Naive thymus-derived CD4-positive, alpha-beta T cell (primary cell): ENCODE measurements at regions of chr12 and their contacts with region 1.

Region 1: GRCh38 chr12:1594261-1595025 is at the start of gene FBXL14:
- DNase-seq: peak; percentile 87 to 93 (median 92)
- ATAC-seq: peak; percentile 85
- H3K4me3 ChIP-seq: peak within 1 kb of the TSS; percentile 91
- H3K4me3 Mint-ChIP-seq: peak within 1 kb of the TSS; percentile 89 to 98 (median 95)
- H3K27ac ChIP-seq: peak within 1 kb of the TSS; percentile 80
- H3K27ac Mint-ChIP-seq: peak within 1 kb of the TSS; percentile 94 to 97 (median 94)
- H3K4me1 ChIP-seq: peaks cover 19 to 23% of the 10 kb centered on the region in 2 donors
- H3K4me1 Mint-ChIP-seq: peaks cover 40 to 53% (median 44%) of the 10 kb centered on the region in 7 donors
- H3K27me3 ChIP-seq: no peaks in the 10 kb centered on the region
- H3K27me3 Mint-ChIP-seq: peaks cover 0 to 9% (median 0%) of the 10 kb centered on the region in 5 donors
- total RNA-seq, gene FBXL14: 25.6 to 43.8 (median 28.1) TPM

Region 2: GRCh38 chr12:459430-460258 is 1134.8 kb before region 1 on chr12 and contains the start of gene B4GALNT3:
- CTCF ChIA-PET with region 1: no interaction called
- POLR2A ChIA-PET with region 1: no interaction called
- intact Hi-C with region 1: loop called in 1 of 2 experiments (anchors 5 kb)
- DNase-seq: peak in 7 of 9 donors; percentile 17 to 40 (median 27)
- ATAC-seq: peak; percentile 80
- H3K4me3 ChIP-seq: peak within 1 kb of the TSS; percentile 72
- H3K4me3 Mint-ChIP-seq: peak within 1 kb of the TSS; percentile 82 to 90 (median 86)
- H3K27ac ChIP-seq: no peak within 1 kb of the TSS
- H3K27ac Mint-ChIP-seq: peak within 1 kb of the TSS in 2 of 9 donors; percentile 43 to 48
- H3K4me1 ChIP-seq: peaks cover 9 to 13% of the 10 kb centered on the region in 2 donors
- H3K4me1 Mint-ChIP-seq: peaks cover 8 to 31% (median 18%) of the 10 kb centered on the region in 7 donors
- H3K27me3 ChIP-seq: no peaks in the 10 kb centered on the region
- H3K27me3 Mint-ChIP-seq: peaks cover 5 to 83% (median 14%) of the 10 kb centered on the region in 5 donors
- total RNA-seq, gene B4GALNT3: 0.49 to 12.2 (median 1.3) TPM

Region 3: GRCh38 chr12:990661-991349 is 603.6 kb before region 1 on chr12 and contains the start of gene ERC1:
- CTCF ChIA-PET with region 1: no interaction called
- POLR2A ChIA-PET with region 1: no interaction called
- intact Hi-C with region 1: loop called (anchors 2 kb)
- DNase-seq: peak; percentile 77 to 93 (median 87)
- ATAC-seq: peak; percentile 94
- H3K4me3 ChIP-seq: peak within 1 kb of the TSS; percentile 89
- H3K4me3 Mint-ChIP-seq: peak within 1 kb of the TSS; percentile 86 to 100 (median 97)
- H3K27ac ChIP-seq: peak within 1 kb of the TSS; percentile 87
- H3K27ac Mint-ChIP-seq: peak within 1 kb of the TSS; percentile 89 to 98 (median 96)
- H3K4me1 ChIP-seq: peaks cover 0 to 17% of the 10 kb centered on the region in 2 donors
- H3K4me1 Mint-ChIP-seq: peaks cover 34 to 55% (median 46%) of the 10 kb centered on the region in 7 donors
- H3K27me3 ChIP-seq: no peaks in the 10 kb centered on the region
- H3K27me3 Mint-ChIP-seq: no peaks in the 10 kb centered on the region
- total RNA-seq, gene ERC1: 48.6 to 62.0 (median 52.4) TPM

Region 4: DNA sequence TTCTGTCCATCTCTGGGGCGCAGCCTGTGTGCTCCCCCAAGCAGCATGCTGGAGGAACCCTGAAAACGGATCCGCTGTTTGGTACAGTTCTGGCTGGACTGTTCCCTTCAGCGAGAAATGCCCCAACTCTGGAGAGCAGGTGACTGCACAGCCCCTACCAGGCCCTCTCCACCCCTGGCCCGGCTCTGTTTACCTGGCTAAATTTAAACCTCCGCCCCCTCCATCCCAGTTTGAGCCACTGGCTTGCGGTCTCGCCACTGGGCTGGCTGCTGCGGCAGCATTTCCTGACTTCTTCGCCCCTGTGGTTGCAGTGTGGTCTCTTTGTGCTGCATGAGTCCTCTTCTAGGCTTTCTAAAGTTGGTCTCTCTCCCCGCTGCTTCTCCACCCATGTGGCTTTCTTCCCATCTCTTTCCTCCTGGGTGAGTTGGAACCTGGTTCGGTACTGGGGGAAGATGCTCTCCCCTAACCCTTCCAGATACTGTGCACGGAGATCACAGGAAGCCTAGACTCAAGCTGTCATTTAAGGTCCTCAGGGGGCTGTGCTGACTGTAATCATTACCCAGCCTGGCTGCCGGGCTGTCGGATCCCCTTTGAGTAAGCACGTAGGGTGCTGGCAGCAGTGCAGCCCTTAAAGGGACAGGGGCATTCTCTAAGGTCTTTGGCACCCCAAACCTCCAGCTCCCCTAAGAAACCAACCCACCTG is 60.7 kb before region 1 on chr12:
- CTCF ChIA-PET with region 1: no interaction called
- POLR2A ChIA-PET with region 1: no interaction called
- intact Hi-C with region 1: loop called (anchors 2 to 5 kb)
- DNase-seq: peak in 6 of 9 donors; percentile 12 to 68 (median 30)
- ATAC-seq: peak; percentile 58
- H3K4me3 ChIP-seq: peak overlapping the region; percentile 48
- H3K4me3 Mint-ChIP-seq: peak overlapping the region; percentile 81 to 89 (median 85)
- H3K27ac ChIP-seq: no peak overlapping the region
- H3K27ac Mint-ChIP-seq: peak overlapping the region in 1 of 9 donors; percentile 40
- H3K4me1 ChIP-seq: peaks cover 32 to 34% of the 10 kb centered on the region in 2 donors
- H3K4me1 Mint-ChIP-seq: peaks cover 25 to 38% (median 29%) of the 10 kb centered on the region in 7 donors
- H3K27me3 ChIP-seq: peaks cover 19 to 36% of the 10 kb centered on the region in 2 donors
- H3K27me3 Mint-ChIP-seq: peaks cover 63 to 80% (median 77%) of the 10 kb centered on the region in 5 donors

Region 5: DNA sequence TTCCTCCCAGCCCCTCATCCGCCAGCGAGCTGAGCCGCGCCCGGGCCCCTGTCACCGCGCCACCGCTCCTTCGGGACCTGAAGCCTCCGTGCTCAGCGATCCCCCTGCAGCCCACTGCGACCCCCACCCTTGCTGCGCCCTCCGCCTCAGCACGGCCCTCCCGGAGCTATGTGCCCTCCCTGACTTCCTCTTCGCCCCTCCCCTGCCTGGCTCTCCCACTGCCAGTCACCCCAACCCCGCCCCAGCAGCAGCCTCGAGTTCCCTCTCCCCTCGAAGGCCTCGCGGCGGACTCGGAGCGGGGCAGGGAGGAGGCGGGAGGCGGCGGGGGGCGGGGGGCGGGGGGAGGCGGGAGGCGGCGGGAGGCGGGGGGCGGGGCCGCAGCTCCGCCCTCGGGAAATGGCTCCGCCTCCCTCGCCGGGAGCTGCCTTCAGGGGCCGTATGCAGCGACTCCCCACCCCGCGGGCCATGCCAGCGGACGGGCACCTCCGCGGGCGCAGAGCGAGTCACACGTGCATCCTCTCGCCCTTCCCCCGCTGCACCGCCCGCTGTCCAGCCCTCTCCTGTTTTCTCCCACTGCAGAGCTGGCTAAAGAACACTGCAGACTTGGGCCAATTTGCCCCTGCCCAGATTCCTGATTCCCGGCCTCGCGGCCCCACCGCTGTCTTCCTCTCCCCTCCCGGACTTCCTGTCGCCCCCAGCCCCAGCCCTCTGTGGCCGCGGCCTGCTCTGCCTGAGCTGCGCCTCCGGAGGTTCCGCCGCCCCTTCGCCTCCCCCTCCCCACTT is 67.3 kb after region 1 on chr12:
- CTCF ChIA-PET with region 1: no interaction called
- POLR2A ChIA-PET with region 1: no interaction called
- intact Hi-C with region 1: loop called in 1 of 2 experiments (anchors 5 kb)
- DNase-seq: peak; percentile 74 to 84 (median 82)
- ATAC-seq: peak; percentile 93
- H3K4me3 ChIP-seq: peak overlapping the region; percentile 64
- H3K4me3 Mint-ChIP-seq: peak overlapping the region; percentile 70 to 86 (median 78)
- H3K27ac ChIP-seq: peak overlapping the region; percentile 66
- H3K27ac Mint-ChIP-seq: peak overlapping the region in 8 of 9 donors; percentile 62 to 87 (median 82)
- H3K4me1 ChIP-seq: peaks cover 5 to 7% of the 10 kb centered on the region in 2 donors
- H3K4me1 Mint-ChIP-seq: peaks cover 14 to 37% (median 31%) of the 10 kb centered on the region in 7 donors
- H3K27me3 ChIP-seq: no peaks in the 10 kb centered on the region
- H3K27me3 Mint-ChIP-seq: peaks cover 0 to 2% (median 0%) of the 10 kb centered on the region in 5 donors

Region 6: GRCh38 chr12:1790444-1790843 is 196.0 kb after region 1 on chr12:
- CTCF ChIA-PET with region 1: no interaction called
- POLR2A ChIA-PET with region 1: no interaction called
- intact Hi-C with region 1: no loop called
- DNase-seq: no peak
- ATAC-seq: no peak
- H3K4me3 ChIP-seq: no peak overlapping the region
- H3K4me3 Mint-ChIP-seq: no peak overlapping the region
- H3K27ac ChIP-seq: no peak overlapping the region
- H3K27ac Mint-ChIP-seq: peak overlapping the region in 3 of 9 donors; percentile 8 to 79 (median 74)
- H3K4me1 ChIP-seq: peaks cover 6 to 9% of the 10 kb centered on the region in 2 donors
- H3K4me1 Mint-ChIP-seq: peaks cover 12 to 22% (median 19%) of the 10 kb centered on the region in 7 donors
- H3K27me3 ChIP-seq: no peaks in the 10 kb centered on the region
- H3K27me3 Mint-ChIP-seq: no peaks in the 10 kb centered on the region

Region 7: DNA sequence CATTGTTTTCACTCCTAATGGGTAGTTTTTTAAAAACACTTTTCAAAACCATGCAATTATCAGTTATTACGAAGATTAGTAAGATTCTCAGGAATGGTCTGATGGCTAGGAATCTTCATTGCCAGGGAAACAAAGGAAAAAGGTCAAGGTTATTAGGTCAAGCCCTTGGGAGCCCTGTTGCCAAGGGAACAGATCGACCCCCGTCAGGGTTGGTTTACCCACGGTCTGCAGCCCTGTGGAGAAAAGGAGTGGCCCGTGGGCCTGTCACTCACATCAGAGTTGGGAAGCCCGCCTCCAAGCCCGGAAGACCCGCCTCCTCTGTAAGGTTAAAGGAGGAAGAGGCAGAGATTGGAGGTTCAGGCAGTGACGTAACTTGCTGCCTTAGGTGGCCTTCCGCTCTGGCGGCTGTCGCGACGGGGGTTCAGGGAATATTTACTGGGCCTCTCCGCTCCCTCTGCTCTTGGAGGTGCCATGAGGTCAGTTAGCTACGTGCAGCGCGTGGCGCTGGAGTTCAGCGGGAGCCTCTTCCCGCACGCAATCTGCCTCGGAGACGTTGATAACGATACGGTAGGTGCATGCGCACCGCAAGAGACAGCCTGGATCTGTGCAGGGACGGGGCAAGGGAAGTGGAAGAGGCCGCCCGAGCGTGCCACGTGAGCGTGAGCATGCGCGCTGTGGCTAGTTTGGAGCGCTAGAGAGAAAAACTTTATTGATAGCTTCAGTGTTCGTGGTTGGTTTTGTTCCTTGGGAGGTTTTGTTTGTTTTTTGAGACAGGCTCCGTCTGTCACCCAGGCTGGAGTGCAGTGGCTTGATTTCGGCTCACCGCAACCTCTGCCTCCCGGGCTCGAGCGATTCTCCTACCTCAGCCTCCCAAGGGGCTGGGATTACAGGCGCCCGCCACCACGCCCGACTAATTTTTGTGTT is 1218.1 kb after region 1 on chr12 and contains the start of gene ITFG2:
- CTCF ChIA-PET with region 1: no interaction called
- POLR2A ChIA-PET with region 1: no interaction called
- intact Hi-C with region 1: loop called in 1 of 2 experiments (anchors 10 kb)
- DNase-seq: peak; percentile 83 to 98 (median 98)
- ATAC-seq: peak; percentile 97
- H3K4me3 ChIP-seq: peak within 1 kb of the TSS; percentile 97
- H3K4me3 Mint-ChIP-seq: peak within 1 kb of the TSS; percentile 81 to 100 (median 99)
- H3K27ac ChIP-seq: peak within 1 kb of the TSS; percentile 88
- H3K27ac Mint-ChIP-seq: peak within 1 kb of the TSS; percentile 97 to 100 (median 100)
- H3K4me1 ChIP-seq: peaks cover 5 to 15% of the 10 kb centered on the region in 2 donors
- H3K4me1 Mint-ChIP-seq: peaks cover 20 to 41% (median 38%) of the 10 kb centered on the region in 7 donors
- H3K27me3 ChIP-seq: no peaks in the 10 kb centered on the region
- H3K27me3 Mint-ChIP-seq: no peaks in the 10 kb centered on the region
- total RNA-seq, gene ITFG2: 50.4 to 156 (median 95.6) TPM